Head of caudate nucleus (tissue), 42 donors: ENCODE measurements at regions of chr1 and their contacts with region 1.

Region 1: DNA sequence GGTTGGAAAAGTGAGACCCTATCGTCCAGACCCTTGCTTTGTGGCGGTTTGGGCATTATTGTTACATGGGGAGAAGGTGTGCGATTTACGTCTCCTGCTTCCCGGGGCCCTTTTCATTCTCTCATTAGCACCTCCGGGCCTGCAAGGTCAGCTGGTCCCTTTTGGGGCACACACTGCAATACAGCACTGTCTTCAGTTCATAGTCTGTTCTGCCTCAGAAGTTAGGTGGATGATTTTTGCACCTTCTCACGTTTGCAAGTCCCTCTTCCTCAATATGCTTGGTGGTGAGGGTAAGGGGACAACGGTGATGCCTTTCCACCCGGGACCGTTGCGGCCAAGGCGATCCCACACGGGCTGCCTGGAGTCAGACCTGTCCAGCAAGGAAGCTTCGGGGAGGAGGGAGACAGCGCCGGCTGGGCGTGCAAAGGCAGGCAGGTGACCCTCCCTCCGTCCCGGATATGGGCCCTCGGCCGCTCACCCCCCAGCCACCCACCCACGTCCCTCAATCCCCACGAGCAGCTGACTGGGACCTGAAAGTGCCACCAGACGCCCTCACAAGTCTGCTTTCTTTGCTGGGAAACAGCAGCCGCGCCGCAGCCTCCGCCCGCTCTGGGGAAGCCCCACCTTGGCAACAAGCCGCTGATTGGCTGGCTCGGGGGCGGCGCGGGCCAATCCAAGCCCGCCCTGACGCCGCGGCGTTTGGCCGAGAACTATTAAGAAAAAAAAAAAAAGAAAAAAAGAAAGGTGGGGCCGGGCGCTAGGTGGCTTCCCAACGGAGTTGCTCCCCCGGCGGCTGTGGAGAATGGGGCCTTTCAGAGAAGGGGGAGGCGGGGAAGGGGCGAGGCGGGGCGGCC is 21.7 kb downstream of the BTG2 start:
- DNase-seq: peak; percentile 89 to 98 (median 96)

Region 2: GRCh38 chr1:203273206-203273868 is 53.7 kb before region 1 on chr1:
- intact Hi-C with region 1: loop called (anchors 2 kb)
- DNase-seq: peak; percentile 78 to 97 (median 91)